Caco-2 (cell line): ENCODE measurements at regions of chr11 and their contacts with region 1.

Region 1: DNA sequence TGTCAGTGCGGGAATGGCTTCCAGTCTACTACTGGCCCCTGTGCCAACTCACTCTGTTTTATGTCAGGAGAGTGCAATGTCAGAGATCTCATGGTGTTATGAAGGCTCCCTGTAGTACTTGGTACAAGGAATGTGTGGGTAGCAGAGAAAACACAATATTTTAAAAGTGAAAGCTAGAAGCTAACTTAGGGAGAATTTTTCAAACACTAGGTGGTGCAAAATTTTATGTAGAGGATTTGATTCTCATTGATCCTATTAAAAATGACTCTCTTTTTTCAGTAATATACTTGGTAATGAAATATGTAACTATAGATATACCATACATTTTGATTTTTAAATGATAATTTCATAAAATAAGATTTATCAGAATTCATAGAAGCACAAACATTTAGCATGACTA is 134.7 kb downstream of the JRKL start:
- DNase-seq: no peak
- H3K4me3 ChIP-seq: no peak overlapping the region
- H3K4me3 Mint-ChIP-seq: no peak overlapping the region
- H3K27ac Mint-ChIP-seq: no peak overlapping the region
- H3K4me1 ChIP-seq: no peaks in the 10 kb centered on the region
- H3K4me1 Mint-ChIP-seq: no peaks in the 10 kb centered on the region
- H3K27me3 ChIP-seq: no peaks in the 10 kb centered on the region
- H3K27me3 Mint-ChIP-seq: peaks cover 3% of the 10 kb centered on the region
- CTCF ChIP-seq: peak in 1 of 2 experiments; percentile 11

Region 2: DNA sequence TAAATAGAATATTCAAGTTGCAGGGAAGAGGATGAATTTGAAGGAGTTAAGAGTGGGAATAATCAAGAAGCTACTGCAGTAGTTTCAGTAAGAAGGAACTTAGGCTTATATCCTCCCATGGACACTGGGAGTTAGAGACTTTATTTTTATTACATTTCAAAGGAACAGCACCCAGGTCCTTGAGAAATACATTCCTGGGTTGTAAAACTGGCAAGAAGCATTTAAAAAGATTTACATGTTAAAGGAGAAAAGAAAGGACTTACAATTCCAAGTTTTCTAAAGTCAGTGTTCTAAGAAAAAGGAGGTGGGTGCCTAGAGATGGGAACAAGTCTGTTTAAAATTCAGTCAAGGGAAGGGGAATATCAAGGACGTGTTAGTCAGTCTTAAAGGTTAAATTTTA is 172.3 kb after region 1 on chr11:
- CTCF ChIA-PET with region 1: no interaction called
- POLR2A ChIA-PET with region 1: no interaction called
- intact Hi-C with region 1: loop called (anchors 5 kb)
- DNase-seq: no peak
- H3K4me3 ChIP-seq: no peak overlapping the region
- H3K4me3 Mint-ChIP-seq: no peak overlapping the region
- H3K27ac Mint-ChIP-seq: no peak overlapping the region
- H3K4me1 ChIP-seq: no peaks in the 10 kb centered on the region
- H3K4me1 Mint-ChIP-seq: no peaks in the 10 kb centered on the region
- H3K27me3 ChIP-seq: no peaks in the 10 kb centered on the region
- H3K27me3 Mint-ChIP-seq: peaks cover 10% of the 10 kb centered on the region
- CTCF ChIP-seq: no peak

Region 3: GRCh38 chr11:96978751-96979150 is 454.3 kb after region 1 on chr11:
- CTCF ChIA-PET with region 1: no interaction called
- POLR2A ChIA-PET with region 1: no interaction called
- intact Hi-C with region 1: loop called (anchors 5 kb)
- DNase-seq: no peak
- H3K4me3 ChIP-seq: no peak overlapping the region
- H3K4me3 Mint-ChIP-seq: no peak overlapping the region
- H3K27ac Mint-ChIP-seq: no peak overlapping the region
- H3K4me1 ChIP-seq: no peaks in the 10 kb centered on the region
- H3K4me1 Mint-ChIP-seq: no peaks in the 10 kb centered on the region
- H3K27me3 ChIP-seq: no peaks in the 10 kb centered on the region
- H3K27me3 Mint-ChIP-seq: peaks cover 8% of the 10 kb centered on the region
- CTCF ChIP-seq: no peak